ENCODE measurements at regions of chr12 and their contacts with region 1.

Region 1: DNA sequence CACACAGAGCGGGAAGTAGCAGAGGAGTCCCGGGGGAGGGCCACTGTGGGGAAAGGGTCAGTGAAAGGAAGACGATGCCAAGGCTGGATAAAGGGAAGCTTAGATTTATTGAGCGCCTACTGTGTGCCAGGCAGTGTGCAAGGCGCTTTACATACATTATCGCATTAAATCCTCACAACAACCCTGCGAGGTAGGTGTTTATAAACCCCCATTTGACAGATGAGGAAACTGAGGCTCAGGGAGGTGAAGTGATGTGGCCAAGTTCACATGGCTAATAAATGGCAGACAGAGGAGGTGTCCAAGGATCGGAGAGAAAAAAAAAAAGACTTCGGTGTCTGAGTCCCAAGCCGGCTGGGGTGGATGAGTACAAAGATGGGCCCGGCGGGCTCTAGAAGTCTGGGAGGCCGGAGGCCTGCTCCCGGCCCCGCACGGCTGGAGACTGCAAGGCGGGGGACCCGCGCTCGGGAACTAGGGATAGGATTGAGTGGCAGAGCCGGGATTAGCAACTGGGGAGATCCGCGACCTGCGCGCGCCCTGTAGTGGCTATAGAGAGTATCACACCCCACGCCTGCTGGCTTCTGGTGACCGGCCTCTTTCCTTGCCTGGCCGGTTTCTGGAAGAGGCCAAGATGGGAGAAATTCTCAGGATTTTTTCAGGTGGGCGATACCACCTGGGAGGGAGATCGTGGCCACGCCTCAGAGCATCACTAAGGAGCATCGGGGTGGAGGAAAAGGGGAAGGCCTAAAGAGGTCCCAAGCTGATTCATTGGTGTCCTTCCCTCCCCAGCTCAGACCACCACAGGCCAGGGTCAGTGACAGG is 3.9 kb downstream of the DDN start:
- DNase-seq: peak; percentile 53 to 71
- ATAC-seq: peak; percentile 37 to 48 (median 44)
- H3K4me3 ChIP-seq: no peak overlapping the region
- H3K4me3 Mint-ChIP-seq: peak overlapping the region; percentile 79
- H3K27ac ChIP-seq: no peak overlapping the region
- H3K27ac Mint-ChIP-seq: peak overlapping the region; percentile 62 to 65
- H3K4me1 ChIP-seq: peaks cover 45% of the 10 kb centered on the region
- H3K4me1 Mint-ChIP-seq: peaks cover 28 to 42% of the 10 kb centered on the region in 2 donors
- H3K27me3 ChIP-seq: peaks cover 41% of the 10 kb centered on the region
- H3K27me3 Mint-ChIP-seq: peaks cover 23 to 59% of the 10 kb centered on the region in 2 donors
- CTCF ChIP-seq: peak; percentile 76

Region 2: DNA sequence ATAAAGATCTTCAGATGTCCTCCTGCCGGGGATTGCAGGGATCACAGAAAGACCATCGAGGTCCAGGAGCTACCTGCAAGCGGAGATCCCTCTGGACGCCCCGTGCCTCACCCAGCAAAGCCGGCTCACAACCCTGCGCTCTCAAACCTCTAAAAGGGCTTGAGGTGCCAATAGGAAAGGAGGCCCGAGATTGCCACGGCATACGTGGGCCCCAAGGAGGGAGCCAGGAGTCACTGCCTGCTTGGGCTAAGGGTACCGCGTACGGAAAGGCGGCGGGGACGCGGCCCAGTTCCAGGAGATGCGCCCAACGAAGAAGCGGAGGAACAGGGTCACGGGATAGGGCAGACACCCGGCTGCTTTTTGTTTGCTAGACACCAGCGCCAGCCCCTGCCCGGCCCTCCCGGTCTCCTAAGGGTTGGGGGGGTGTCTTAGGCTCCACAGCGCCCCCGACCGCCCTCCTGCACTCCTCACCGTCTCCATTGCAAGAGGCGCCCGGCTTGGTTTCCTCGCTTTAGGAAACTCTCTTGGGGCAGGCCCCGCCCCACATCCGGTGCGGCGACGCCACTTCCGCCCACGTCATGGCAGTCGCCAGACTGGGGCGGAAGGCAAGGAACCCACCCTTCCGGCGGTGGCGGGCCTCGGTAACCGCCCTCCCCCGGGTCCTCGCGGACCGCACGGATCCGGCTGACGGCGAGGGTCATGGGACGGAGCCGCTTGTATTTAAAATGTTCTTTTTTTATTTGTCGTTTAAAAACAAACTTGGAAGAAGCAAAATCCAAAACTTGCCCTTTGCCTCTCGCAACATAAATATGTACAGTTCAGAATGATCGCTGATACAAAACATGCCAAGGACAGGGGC is 23.2 kb after region 1 on chr12 and contains the start of gene PRKAG1:
- intact Hi-C with region 1: loop called (anchors 2 kb)
- DNase-seq: peak; percentile 97 to 98
- ATAC-seq: peak; percentile 81 to 94 (median 86)
- H3K4me3 ChIP-seq: peak within 1 kb of the TSS; percentile 71
- H3K4me3 Mint-ChIP-seq: peak within 1 kb of the TSS; percentile 92
- H3K27ac ChIP-seq: peak within 1 kb of the TSS; percentile 92
- H3K27ac Mint-ChIP-seq: peak within 1 kb of the TSS; percentile 97 to 98
- H3K4me1 ChIP-seq: peaks cover 24% of the 10 kb centered on the region
- H3K4me1 Mint-ChIP-seq: peaks cover 23 to 55% of the 10 kb centered on the region in 2 donors
- H3K27me3 ChIP-seq: no peaks in the 10 kb centered on the region
- H3K27me3 Mint-ChIP-seq: no peaks in the 10 kb centered on the region
- CTCF ChIP-seq: peak; percentile 56
- total RNA-seq, gene PRKAG1: 76.4 to 100 (median 81.1) TPM

Region 3: GRCh38 chr12:49043856-49044258 is 48.6 kb after region 1 on chr12:
- intact Hi-C with region 1: loop called (anchors 5 kb)
- DNase-seq: peak; percentile 77 to 90
- ATAC-seq: peak; percentile 80 to 92 (median 83)
- H3K4me3 ChIP-seq: no peak overlapping the region
- H3K4me3 Mint-ChIP-seq: no peak overlapping the region
- H3K27ac ChIP-seq: no peak overlapping the region
- H3K27ac Mint-ChIP-seq: peak overlapping the region; percentile 81 to 82
- H3K4me1 ChIP-seq: no peaks in the 10 kb centered on the region
- H3K4me1 Mint-ChIP-seq: peaks cover 6 to 16% of the 10 kb centered on the region in 2 donors
- H3K27me3 ChIP-seq: no peaks in the 10 kb centered on the region
- H3K27me3 Mint-ChIP-seq: no peaks in the 10 kb centered on the region
- CTCF ChIP-seq: peak; percentile 75